OCI-LY7 (cell line): ENCODE measurements at regions of chr11 and their contacts with region 1.

Region 1: GRCh38 chr11:47269002-47269828 is 718 bp upstream of the MADD start:
- DNase-seq: peak; percentile 94
- H3K4me3 ChIP-seq: peak overlapping the region; percentile 78
- H3K27ac ChIP-seq: peak overlapping the region; percentile 78
- H3K4me1 ChIP-seq: peaks cover 53% of the 10 kb centered on the region
- CTCF ChIP-seq: peak; percentile 51

Region 2: DNA sequence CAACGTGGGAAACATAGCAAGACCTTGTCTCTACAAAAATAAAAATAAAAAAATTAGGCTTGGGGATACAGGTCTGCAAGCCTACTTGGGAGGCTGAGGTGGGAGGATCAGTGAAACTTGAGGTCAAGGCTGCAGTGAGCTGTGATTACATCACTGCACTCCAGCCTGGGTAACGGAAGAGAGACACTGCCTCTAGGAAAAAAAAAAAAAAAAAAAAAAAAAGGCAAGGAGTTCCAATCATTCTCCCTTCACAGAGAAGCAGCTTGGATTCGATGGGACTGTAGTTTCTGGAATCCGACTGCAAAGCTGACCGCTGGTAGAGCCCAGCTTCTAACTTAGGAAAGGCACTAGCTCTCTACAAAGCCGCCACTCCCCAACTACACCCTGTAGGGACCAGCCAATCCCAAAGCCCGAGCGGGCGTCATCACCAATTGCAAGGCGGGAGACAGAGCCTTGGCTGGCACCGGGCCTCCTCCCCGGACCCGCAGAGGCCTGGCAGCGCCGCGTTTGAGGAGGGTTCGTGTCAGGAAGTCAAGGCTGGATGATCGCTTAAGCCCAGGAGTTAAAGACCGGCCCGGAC is 55.1 kb before region 1 on chr11:
- CTCF ChIA-PET with region 1: no interaction called
- POLR2A ChIA-PET with region 1: interaction called, 3 read pairs
- intact Hi-C with region 1: loop called (anchors 1 kb)
- DNase-seq: peak; percentile 37
- H3K4me3 ChIP-seq: peak overlapping the region; percentile 69
- H3K27ac ChIP-seq: no peak overlapping the region
- H3K4me1 ChIP-seq: peaks cover 50% of the 10 kb centered on the region
- CTCF ChIP-seq: no peak

Region 3: DNA sequence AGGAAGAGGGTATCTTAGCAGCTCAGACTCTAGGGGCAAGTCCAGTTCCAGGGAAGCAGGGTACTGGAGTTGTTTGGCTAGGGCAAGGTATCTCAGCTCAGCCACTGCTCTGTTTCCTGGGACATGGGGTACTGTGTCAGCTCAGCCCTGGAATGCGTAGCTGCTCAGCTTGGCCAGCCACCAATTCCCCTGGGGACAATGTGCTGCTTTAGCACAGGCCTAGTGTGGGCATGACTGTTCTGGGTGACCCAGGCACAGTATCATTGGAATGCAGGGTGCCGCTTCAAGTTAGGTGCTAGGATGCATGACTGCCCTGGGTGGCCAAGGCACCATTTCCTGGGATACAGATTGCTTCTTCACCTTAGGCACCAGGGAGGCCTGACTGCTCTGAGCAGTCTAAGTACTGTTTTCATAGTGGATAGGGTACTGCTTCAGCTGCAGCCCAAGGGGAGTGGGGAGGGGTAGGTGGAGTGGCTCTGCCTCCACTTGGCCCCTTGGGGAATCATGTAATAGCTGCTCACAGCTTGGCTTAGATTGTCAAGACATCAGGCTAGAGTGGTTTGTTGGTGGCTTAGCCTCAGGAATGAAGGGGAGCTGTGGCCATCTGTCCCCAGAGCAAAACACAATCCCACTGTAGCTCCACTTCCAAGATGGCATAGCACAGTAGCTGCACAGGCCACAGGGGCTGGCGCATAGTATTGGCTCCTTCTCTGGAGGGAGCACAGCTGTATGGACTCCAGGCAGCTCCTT is 36.7 kb after region 1 on chr11:
- CTCF ChIA-PET with region 1: no interaction called
- POLR2A ChIA-PET with region 1: no interaction called
- intact Hi-C with region 1: no loop called
- DNase-seq: no peak
- H3K4me3 ChIP-seq: no peak overlapping the region
- H3K27ac ChIP-seq: no peak overlapping the region
- H3K4me1 ChIP-seq: no peaks in the 10 kb centered on the region
- CTCF ChIP-seq: no peak

Region 4: GRCh38 chr11:47373876-47374720 is 104.9 kb after region 1 on chr11:
- CTCF ChIA-PET with region 1: no interaction called
- POLR2A ChIA-PET with region 1: interaction called, 4 read pairs
- intact Hi-C with region 1: loop called (anchors 5 kb)
- DNase-seq: peak; percentile 81
- H3K4me3 ChIP-seq: no peak overlapping the region
- H3K27ac ChIP-seq: peak overlapping the region; percentile 45
- H3K4me1 ChIP-seq: peaks cover 43% of the 10 kb centered on the region
- CTCF ChIP-seq: peak; percentile 98

Region 5: GRCh38 chr11:47426061-47426956 is 157.1 kb after region 1 on chr11 and contains the start of gene PSMC3:
- CTCF ChIA-PET with region 1: no interaction called
- POLR2A ChIA-PET with region 1: no interaction called
- intact Hi-C with region 1: loop called (anchors 1 kb)
- DNase-seq: peak; percentile 99
- H3K4me3 ChIP-seq: peak within 1 kb of the TSS; percentile 88
- H3K27ac ChIP-seq: peak within 1 kb of the TSS; percentile 47
- H3K4me1 ChIP-seq: peaks cover 17% of the 10 kb centered on the region
- CTCF ChIP-seq: no peak
- total RNA-seq, gene PSMC3: 122 and 135 TPM in 2 replicates

Region 6: DNA sequence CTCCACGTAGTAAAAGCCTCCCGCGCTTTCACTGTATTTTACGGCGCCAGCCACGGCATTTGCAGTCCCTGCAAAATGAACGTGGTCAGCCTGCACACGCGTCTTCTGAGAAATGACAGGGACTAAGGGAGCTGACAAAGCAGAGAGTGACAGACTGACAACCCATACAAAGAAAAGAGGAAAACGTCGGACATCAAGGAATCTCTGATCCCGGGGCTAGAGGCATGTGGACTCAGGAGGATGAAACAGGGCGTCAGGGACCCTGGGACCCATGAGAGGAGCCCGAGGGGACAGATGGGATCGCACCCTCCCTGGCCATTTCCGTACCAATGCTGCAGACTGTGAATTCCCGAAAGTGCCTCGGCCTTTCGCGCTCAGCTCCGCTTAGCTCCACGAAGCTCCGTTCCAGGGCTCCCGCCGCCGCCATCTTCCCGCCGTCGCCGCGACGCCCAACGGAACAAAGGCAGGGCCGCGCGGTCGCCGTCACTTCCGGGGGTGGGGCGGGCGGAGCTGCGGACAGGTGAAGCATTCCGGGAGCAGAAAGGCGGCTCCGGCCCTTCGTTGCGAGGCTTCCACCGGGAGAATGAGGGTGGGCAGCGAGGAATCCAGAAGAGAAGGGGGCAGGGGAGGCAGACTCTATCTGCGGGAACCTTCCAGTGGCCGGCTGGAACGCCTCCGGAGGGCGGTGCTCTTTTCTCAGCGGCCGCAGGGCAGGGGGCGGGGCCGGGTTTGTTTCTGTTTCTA is 578.8 kb after region 1 on chr11 and contains the start of gene NUP160:
- CTCF ChIA-PET with region 1: no interaction called
- POLR2A ChIA-PET with region 1: no interaction called
- intact Hi-C with region 1: loop called (anchors 5 kb)
- DNase-seq: peak; percentile 76
- H3K4me3 ChIP-seq: peak within 1 kb of the TSS; percentile 94
- H3K27ac ChIP-seq: peak within 1 kb of the TSS; percentile 59
- H3K4me1 ChIP-seq: peaks cover 50% of the 10 kb centered on the region
- CTCF ChIP-seq: no peak
- total RNA-seq, gene NUP160: 23.9 and 32.0 TPM in 2 replicates